ENCODE measurements at regions of chr12 and their contacts with region 1.

Region 1: GRCh38 chr12:128810182-128811127 is 13.3 kb downstream of the SLC15A4 start:
- DNase-seq: no peak
- H3K4me3 ChIP-seq: no peak overlapping the region
- H3K27ac ChIP-seq: no peak overlapping the region
- H3K4me1 ChIP-seq: peaks cover 0 to 4% (median 1%) of the 10 kb centered on the region in 4 experiments; a peak in 2 of 7 replicates
- H3K27me3 ChIP-seq: no peaks in the 10 kb centered on the region
- CTCF ChIP-seq: peak in 2 of 3 experiments; percentile 9 to 17; a peak in 2 of 4 replicates
- EP300 ChIP-seq: no peak
- POLR2A ChIP-seq: no peak
- RAD21 ChIP-seq: no peak

Region 2: DNA sequence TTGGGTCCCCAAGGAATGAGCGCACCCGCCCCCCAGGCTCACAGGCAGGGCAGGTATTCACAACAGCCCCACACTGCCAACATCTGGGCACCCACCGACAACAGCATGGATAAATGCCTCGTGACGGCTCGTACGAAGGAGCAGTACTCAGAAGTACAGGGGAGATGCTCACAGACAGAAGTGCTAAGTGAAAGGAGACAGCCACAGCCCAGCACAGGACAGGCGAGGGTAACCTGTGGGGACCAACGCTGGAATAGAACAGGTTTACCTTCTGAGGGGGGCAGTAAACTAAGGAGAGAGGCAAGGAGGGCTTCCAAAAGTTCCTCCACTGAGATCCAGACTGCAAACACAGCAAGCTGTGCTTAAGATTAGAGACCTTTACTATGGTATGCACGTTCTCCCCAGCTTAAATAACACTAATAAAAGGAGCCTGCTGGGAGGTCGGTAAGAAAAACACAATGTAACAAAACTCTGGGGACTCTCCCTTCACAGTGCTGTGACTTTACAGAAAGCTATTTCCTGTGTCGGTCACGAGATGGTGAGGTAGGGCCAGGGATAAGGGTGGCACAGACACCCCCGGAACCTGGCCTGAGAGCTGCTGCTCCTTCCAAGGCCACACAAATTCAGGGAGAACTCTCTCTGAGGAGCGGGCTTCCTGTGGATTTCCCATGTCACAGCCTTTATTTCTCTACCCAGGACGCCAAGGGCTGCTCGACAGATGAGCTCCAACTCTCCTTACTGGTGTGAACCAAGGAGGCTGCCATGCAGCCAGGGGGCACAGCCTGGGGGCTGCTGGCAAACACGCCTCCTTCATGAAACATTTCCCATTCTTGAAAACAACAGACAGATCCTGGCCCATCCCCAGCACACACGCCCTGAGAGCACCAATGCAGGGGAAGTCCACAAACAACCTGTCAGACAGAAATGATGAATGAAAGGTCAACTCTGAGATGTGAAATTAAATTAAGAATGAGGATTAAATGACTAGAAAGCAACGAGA is 13.0 kb before region 1 on chr12:
- CTCF ChIA-PET with region 1: interaction called, 14 read pairs
- POLR2A ChIA-PET with region 1: interaction called, 3 read pairs
- DNase-seq: peak in 1 of 2 experiments; percentile 50
- H3K4me3 ChIP-seq: no peak overlapping the region; a peak in 1 of 8 replicates
- H3K27ac ChIP-seq: no peak overlapping the region
- H3K4me1 ChIP-seq: peaks cover 7 to 14% (median 11%) of the 10 kb centered on the region in 4 experiments
- H3K27me3 ChIP-seq: no peaks in the 10 kb centered on the region; a peak in 2 of 7 replicates
- CTCF ChIP-seq: no peak
- EP300 ChIP-seq: peak in 1 of 2 experiments; percentile 65; a peak in 1 of 3 replicates
- POLR2A ChIP-seq: no peak
- RAD21 ChIP-seq: peak; percentile 13 to 20; a peak in 2 of 4 replicates

Region 3: DNA sequence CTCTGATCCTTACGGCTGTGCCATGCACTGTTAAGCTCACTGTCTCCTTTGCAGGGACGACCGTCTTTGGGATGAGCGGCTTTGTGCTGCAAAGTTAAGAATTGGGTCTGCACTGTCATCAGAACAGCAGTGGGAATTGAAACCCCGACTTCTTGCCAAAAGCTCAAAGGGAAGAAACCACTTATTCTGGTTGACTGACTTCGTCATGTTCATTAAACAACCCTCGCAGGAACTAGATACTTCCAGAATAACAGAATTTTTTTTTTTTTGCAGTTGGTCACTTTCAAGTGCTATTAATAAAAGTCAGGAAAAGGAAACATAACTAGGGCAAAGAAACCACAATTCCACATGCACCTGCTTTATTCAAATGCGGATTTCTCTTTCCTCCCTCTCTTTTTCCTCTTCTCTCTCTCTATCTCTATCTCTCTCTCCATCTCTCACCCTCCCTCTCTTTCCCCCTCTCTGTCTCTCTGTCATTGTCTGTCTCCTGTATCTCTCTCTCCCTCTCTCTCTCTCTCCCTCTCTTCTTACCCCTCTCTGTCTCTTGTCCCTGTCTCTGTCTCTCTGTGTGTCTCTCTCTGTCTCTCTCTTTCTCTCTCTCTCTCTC is 30.5 kb after region 1 on chr12:
- CTCF ChIA-PET with region 1: no interaction called
- POLR2A ChIA-PET with region 1: no interaction called
- DNase-seq: no peak
- H3K4me3 ChIP-seq: no peak overlapping the region
- H3K27ac ChIP-seq: no peak overlapping the region
- H3K4me1 ChIP-seq: peaks cover 0 to 2% (median under 1%) of the 10 kb centered on the region in 4 experiments; a peak in 2 of 7 replicates
- H3K27me3 ChIP-seq: no peaks in the 10 kb centered on the region
- CTCF ChIP-seq: no peak
- EP300 ChIP-seq: no peak
- POLR2A ChIP-seq: no peak
- RAD21 ChIP-seq: no peak